A673 (cell line): ENCODE measurements at regions of chr18 and their contacts with region 1.

Region 1: DNA sequence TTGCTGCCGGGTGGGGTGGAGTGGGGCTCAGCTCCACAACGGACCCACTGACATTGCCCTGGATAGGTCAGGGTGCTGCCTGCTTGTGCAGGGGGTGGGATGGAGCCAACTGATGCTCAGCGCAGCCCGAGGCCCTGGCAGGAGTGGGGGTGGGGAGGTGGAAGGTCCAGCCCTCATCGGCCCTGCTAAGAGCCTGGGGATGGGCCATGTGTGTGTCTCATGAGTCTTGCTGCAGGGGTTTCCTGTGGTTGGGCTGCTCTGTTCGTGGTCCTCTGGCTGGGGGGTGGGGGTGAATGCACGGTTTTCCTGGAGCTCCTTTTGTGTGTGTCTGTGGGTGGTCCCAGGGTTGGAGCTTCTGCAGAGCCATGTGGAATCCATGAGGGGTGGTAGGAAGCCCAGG is 39.4 kb upstream of the GALR1 start:
- DNase-seq: no peak
- H3K4me3 ChIP-seq: no peak overlapping the region
- H3K27ac ChIP-seq: no peak overlapping the region
- H3K4me1 ChIP-seq: no peaks in the 10 kb centered on the region
- H3K27me3 ChIP-seq: no peaks in the 10 kb centered on the region
- CTCF ChIP-seq: no peak

Region 2: GRCh38 chr18:77000527-77000926 is 209.7 kb before region 1 on chr18:
- CTCF ChIA-PET with region 1: interaction called, 4 read pairs
- POLR2A ChIA-PET with region 1: no interaction called
- intact Hi-C with region 1: loop called (anchors 5 kb)
- DNase-seq: peak; percentile 41
- H3K4me3 ChIP-seq: no peak overlapping the region
- H3K27ac ChIP-seq: no peak overlapping the region
- H3K4me1 ChIP-seq: no peaks in the 10 kb centered on the region
- H3K27me3 ChIP-seq: peaks cover 43% of the 10 kb centered on the region
- CTCF ChIP-seq: peak; percentile 99